B cell (primary cell): ENCODE measurements at regions of chr1 and their contacts with region 1.

Region 1: DNA sequence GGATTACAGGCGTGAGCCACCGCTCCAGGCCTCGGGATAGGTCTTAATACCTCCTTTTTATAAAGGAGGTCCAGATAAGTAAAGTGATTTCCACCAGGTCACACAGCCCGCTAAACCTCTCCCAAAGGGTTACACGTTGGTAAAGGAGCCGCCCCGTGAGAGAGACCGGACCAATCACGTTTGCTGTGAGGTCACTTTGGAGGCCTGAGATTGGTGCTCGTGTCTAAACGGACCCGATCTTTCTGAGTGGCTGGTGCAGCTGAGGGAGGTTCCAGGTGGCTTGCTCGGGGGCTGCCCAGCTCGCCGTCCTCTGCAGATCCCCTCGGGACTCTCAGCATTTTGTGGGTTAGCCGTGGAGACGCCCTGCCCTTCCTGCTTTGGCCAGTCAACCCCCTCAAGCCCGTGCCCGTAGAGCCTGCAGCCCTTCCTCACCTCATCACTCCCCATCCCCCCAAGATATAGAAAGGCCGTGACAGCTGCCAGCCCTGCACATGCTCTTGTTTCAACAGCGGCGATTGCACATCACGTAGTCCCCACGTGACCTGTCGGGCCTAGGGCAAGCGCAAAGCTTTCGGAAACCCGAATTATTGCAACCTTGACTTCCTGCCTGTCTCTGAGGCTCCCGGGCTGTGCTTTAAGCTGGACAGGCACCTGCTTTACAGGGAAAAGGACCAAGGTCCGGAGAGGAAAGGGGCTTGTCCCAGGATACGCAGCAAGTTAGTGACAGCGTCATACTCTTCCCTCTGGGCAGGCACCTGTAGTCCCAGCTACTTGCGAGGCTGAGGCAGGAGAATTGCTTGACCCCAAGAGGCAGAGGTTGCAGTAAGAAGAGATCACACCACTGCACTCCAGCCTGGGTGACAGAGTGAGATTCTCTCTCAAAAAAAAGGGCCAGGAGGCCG is 5.0 kb upstream of the COA7 start:
- DNase-seq: peak; percentile 93
- ATAC-seq: peak; percentile 86
- H3K4me3 ChIP-seq: peak overlapping the region in 4 of 5 experiments; percentile 37 to 57 (median 49)
- H3K4me3 Mint-ChIP-seq: peak overlapping the region; percentile 90
- H3K27ac ChIP-seq: peak overlapping the region; percentile 83 to 88
- H3K27ac Mint-ChIP-seq: peak overlapping the region; percentile 97
- H3K4me1 ChIP-seq: peaks cover 8 to 21% of the 10 kb centered on the region in 2 donors
- H3K4me1 Mint-ChIP-seq: peaks cover 24% of the 10 kb centered on the region
- H3K27me3 ChIP-seq: no peaks in the 10 kb centered on the region
- H3K27me3 Mint-ChIP-seq: peaks cover under 1% of the 10 kb centered on the region
- CTCF ChIP-seq: no peak

Region 2: DNA sequence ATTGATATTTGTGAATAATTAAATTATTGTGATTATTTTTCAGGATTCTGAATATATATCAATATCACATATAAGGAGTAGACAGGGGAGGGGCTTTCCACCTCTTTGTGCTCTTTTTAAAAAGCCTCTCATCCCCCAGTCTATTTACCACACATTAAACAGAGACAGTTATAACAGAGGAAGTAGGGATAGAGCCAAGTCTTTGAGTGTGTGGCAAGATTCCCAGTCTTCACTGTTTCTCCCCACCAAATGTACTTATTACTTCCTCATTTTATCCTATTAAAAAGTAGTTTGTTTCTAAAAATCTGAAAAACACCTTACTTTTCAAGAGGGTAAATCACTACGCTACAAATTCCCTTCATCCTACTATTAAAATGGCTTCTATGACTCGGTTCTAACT is 1230.8 kb before region 1 on chr1:
- CTCF ChIA-PET with region 1: no interaction called
- POLR2A ChIA-PET with region 1: no interaction called
- intact Hi-C with region 1: no loop called
- DNase-seq: no peak
- ATAC-seq: no peak
- H3K4me3 ChIP-seq: no peak overlapping the region
- H3K4me3 Mint-ChIP-seq: no peak overlapping the region
- H3K27ac ChIP-seq: peak overlapping the region in 1 of 2 donors; percentile 58
- H3K27ac Mint-ChIP-seq: no peak overlapping the region
- H3K4me1 ChIP-seq: no peaks in the 10 kb centered on the region
- H3K4me1 Mint-ChIP-seq: peaks cover 16% of the 10 kb centered on the region
- H3K27me3 ChIP-seq: no peaks in the 10 kb centered on the region
- H3K27me3 Mint-ChIP-seq: no peaks in the 10 kb centered on the region
- CTCF ChIP-seq: no peak

Region 3: GRCh38 chr1:52726265-52727113 is 23.4 kb after region 1 on chr1 and contains the start of gene ZYG11B:
- CTCF ChIA-PET with region 1: interaction called, 6 read pairs
- POLR2A ChIA-PET with region 1: interaction called, 3 read pairs
- intact Hi-C with region 1: loop called (anchors 1 kb)
- DNase-seq: peak; percentile 95
- ATAC-seq: peak; percentile 95
- H3K4me3 ChIP-seq: peak within 1 kb of the TSS; percentile 56 to 92 (median 76)
- H3K4me3 Mint-ChIP-seq: peak within 1 kb of the TSS; percentile 95
- H3K27ac ChIP-seq: peak within 1 kb of the TSS in 1 of 2 donors; percentile 66
- H3K27ac Mint-ChIP-seq: peak within 1 kb of the TSS; percentile 88
- H3K4me1 ChIP-seq: peaks cover 8 to 12% of the 10 kb centered on the region in 2 donors
- H3K4me1 Mint-ChIP-seq: peaks cover 35% of the 10 kb centered on the region
- H3K27me3 ChIP-seq: no peaks in the 10 kb centered on the region
- H3K27me3 Mint-ChIP-seq: peaks cover 4% of the 10 kb centered on the region
- CTCF ChIP-seq: no peak
- total RNA-seq, gene ZYG11B: 22.3 and 22.7 TPM in 2 replicates

Region 4: DNA sequence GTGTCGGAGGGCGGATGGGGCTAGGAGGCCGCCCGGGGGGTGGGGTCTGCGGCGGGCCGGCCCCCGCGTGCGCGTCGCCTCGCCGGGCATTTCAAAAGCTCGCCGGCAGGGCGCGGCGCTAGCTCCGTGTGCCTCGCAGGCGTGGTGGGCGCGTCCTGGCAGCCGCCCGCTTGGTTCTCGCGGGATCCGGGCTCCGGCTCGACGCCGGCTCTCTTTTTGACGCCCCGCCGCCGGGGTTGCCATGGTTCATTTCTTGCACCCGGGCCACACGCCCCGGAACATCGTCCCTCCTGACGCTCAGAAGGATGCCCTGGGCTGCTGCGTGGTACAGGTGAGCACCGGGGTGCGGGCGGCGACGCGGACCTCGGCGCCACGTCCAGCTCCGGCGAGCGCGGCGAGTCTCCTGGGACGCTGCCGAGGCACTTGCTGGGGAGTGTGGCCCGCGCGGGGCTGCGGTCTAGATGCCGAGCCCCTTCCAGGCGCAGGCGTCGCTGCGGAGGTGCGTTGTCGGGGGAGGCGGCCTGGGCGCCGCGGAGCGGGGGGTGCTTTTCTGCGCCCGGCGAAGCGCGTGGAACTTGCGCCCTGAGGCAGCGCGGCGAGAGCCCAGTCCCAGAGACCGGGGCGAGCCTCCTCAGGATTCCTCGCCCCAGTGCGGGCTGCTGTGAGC is 139.6 kb after region 1 on chr1 and contains the start of gene ZYG11A:
- CTCF ChIA-PET with region 1: no interaction called
- POLR2A ChIA-PET with region 1: interaction called, 6 read pairs
- intact Hi-C with region 1: loop called (anchors 2 kb)
- DNase-seq: peak; percentile 83
- ATAC-seq: peak; percentile 93
- H3K4me3 ChIP-seq: peak within 1 kb of the TSS; percentile 30 to 67 (median 52)
- H3K4me3 Mint-ChIP-seq: peak within 1 kb of the TSS; percentile 80
- H3K27ac ChIP-seq: peak within 1 kb of the TSS; percentile 33 to 51
- H3K27ac Mint-ChIP-seq: peak within 1 kb of the TSS; percentile 71
- H3K4me1 ChIP-seq: peaks cover 9 to 14% of the 10 kb centered on the region in 2 donors
- H3K4me1 Mint-ChIP-seq: peaks cover 11% of the 10 kb centered on the region
- H3K27me3 ChIP-seq: peaks cover 0 to 29% (median 5%) of the 10 kb centered on the region in 4 experiments
- H3K27me3 Mint-ChIP-seq: peaks cover 8% of the 10 kb centered on the region
- CTCF ChIP-seq: peak; percentile 43
- total RNA-seq, gene ZYG11A: 1.5 and 1.7 TPM in 2 replicates

Region 5: GRCh38 chr1:53014791-53015507 is 311.8 kb after region 1 on chr1:
- CTCF ChIA-PET with region 1: no interaction called
- POLR2A ChIA-PET with region 1: no interaction called
- intact Hi-C with region 1: loop called (anchors 10 kb)
- DNase-seq: peak; percentile 86
- ATAC-seq: peak; percentile 96
- H3K4me3 ChIP-seq: peak overlapping the region; percentile 45 to 88 (median 62)
- H3K4me3 Mint-ChIP-seq: peak overlapping the region; percentile 87
- H3K27ac ChIP-seq: peak overlapping the region in 1 of 2 donors; percentile 13
- H3K27ac Mint-ChIP-seq: peak overlapping the region; percentile 62
- H3K4me1 ChIP-seq: peaks cover 19 to 20% of the 10 kb centered on the region in 2 donors
- H3K4me1 Mint-ChIP-seq: peaks cover 27% of the 10 kb centered on the region
- H3K27me3 ChIP-seq: no peaks in the 10 kb centered on the region
- H3K27me3 Mint-ChIP-seq: no peaks in the 10 kb centered on the region
- CTCF ChIP-seq: no peak